Kidney (tissue), 22 donors: ENCODE measurements at regions of chr2 and their contacts with region 1.

Region 1: DNA sequence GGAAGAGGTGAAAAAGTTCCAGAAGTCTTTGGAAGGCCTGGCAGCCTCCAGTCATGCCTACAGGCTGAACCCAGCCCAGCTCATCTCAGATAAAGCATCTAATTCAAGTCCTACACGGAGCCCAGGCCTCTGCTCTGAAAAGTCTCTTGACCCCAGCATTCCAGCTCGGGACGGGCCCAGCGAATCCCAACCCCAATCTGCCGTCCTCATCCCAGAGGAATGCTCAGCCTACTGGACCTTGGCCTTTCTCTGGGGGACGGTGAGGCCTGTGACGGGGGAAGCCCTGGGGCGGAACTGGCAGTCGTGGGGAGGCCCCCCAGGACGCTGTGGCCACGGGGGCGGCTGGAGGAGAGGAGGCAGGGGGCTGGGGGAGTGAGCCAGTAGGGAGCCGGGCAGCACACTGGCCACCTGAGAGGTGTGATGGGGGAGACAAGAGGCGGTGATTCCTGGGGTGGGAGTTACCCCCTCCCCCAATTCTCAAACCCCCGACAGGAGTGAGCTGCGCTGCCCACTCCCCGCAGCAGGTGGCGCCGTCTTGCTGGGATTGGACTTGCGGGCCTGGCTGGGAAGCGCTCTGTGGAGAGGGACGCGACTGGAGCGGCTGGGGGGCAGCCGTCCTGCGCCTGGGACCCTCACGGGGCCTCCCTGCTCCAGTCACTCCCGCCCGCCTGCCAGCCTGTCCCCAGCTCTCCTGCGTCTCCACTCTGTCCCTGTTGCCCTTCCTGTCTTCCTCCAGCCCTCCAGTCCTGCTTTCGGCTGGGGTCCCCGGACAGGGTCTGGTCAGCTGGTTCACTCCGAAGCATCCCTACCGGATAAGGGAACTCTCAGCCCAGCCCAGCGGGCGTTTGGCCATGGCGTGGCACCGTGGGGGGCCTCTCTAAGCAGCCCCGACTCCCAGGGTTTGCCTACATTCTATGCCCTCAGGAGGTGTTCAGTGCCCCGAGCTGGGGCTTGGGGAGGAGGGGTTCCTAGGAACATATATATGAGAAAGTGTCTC is 182.6 kb upstream of the HAAO start:
- DNase-seq: peak; percentile 85 to 94 (median 91)
- H3K4me3 ChIP-seq: peak overlapping the region in 1 of 3 donors; percentile 59
- H3K27ac ChIP-seq: peak overlapping the region; percentile 57 to 70
- H3K4me1 ChIP-seq: peaks cover 6 to 23% (median 14%) of the 10 kb centered on the region in 3 donors
- H3K27me3 ChIP-seq: no peaks in the 10 kb centered on the region
- CTCF ChIP-seq: peak; percentile 96

Region 2: GRCh38 chr2:43239981-43240761 is 265.2 kb after region 1 on chr2:
- intact Hi-C with region 1: loop called (anchors 10 kb)
- DNase-seq: no peak
- H3K4me3 ChIP-seq: no peak overlapping the region
- H3K27ac ChIP-seq: no peak overlapping the region
- H3K4me1 ChIP-seq: peaks cover 0 to 2% (median 0%) of the 10 kb centered on the region in 3 donors
- H3K27me3 ChIP-seq: no peaks in the 10 kb centered on the region
- CTCF ChIP-seq: no peak

Region 3: GRCh38 chr2:43484323-43484930 is 509.4 kb after region 1 on chr2:
- intact Hi-C with region 1: loop called (anchors 10 kb)
- DNase-seq: peak in 2 of 5 donors; percentile 90 to 96
- H3K4me3 ChIP-seq: no peak overlapping the region
- H3K27ac ChIP-seq: no peak overlapping the region
- H3K4me1 ChIP-seq: peaks cover 7 to 18% (median 8%) of the 10 kb centered on the region in 3 donors
- H3K27me3 ChIP-seq: no peaks in the 10 kb centered on the region
- CTCF ChIP-seq: peak; percentile 70